ENCODE measurements at regions of chr6 and their contacts with region 1.

Region 1: DNA sequence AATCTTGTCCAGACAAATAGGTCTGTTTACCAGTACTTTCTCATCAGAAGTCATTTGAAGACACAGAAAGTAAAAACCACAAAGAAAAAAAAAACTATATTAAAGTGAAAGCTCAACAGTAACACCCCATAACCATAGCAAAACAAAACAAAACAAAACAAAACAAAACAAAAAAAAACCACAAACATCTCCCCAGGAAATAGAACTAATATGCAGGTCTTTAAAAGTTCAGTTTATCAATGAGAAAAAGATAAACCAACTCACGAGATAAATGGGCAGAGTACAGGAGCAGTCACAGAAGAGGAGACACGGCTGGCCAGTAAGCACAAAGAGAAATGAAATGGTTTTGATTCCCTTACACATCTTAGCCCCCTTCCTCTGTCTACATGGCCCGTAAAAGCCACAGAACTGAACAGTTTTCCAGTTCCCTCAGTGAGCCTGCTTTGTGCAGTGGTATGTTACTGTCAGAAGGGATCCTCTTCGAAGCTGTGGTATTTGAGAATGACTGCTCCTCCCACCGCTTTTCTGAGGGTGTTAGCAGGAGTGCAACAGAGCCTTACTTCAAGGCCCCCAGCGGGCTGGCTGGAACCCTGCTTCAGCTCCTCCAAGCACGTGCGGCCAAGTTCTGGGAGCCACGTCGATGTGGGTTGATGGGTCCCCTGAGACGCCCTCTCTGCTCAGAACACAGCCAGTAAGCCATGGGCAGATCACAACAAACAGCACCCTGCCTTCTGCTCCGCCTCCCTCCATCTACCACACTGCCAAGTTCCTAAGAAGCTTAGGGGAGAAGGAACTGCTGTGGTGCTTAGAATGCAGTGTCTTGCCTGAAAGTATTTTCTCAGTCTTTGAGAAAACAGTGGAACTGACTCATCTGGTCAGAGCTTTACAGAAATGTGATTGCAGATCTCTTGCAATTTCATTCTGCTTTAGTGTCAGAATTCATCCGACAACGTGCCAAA is 14.0 kb downstream of the UST start:
- DNase-seq: peak; percentile 90
- H3K4me3 ChIP-seq: peak overlapping the region; percentile 55
- CTCF ChIP-seq: no peak

Region 2: GRCh38 chr6:148747471-148748165 is 13.2 kb before region 1 on chr6:
- CTCF ChIA-PET with region 1: interaction called, 15 read pairs
- POLR2A ChIA-PET with region 1: interaction called, 5 read pairs
- DNase-seq: no peak
- H3K4me3 ChIP-seq: peak overlapping the region; percentile 78
- CTCF ChIP-seq: peak; percentile 0

Region 3: GRCh38 chr6:148999929-149000468 is 239.2 kb after region 1 on chr6:
- CTCF ChIA-PET with region 1: no interaction called
- POLR2A ChIA-PET with region 1: no interaction called
- DNase-seq: no peak
- H3K4me3 ChIP-seq: no peak overlapping the region
- CTCF ChIP-seq: no peak

Region 4: DNA sequence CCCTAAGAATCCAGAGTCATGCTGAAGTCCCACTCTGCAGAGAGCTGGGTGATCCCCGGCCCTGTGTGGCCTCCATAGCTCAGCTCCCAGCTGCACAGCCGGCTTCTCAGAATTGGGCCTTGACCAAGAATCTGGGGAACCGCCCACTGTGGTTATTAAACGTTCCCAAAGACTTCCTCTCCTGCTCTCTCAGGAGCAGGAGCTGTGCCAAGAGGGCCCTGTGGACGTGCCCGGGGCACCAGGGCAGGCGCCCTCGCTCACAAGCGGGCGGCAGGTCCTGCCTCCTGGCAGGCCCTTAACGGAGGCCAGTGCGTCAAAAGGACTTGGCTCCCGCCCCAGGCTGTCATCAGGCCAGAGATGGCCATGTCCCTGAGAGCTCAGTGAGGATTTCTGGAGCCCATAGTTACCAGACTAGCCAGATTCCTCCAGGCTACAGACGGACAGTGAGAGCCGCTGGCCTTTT is 693.6 kb after region 1 on chr6:
- CTCF ChIA-PET with region 1: no interaction called
- POLR2A ChIA-PET with region 1: no interaction called
- DNase-seq: peak; percentile 57
- H3K4me3 ChIP-seq: no peak overlapping the region
- CTCF ChIP-seq: no peak